Transverse colon (tissue), 4 donors: ENCODE measurements at regions of chr5 and their contacts with region 1.

Region 1: GRCh38 chr5:130616161-130616560 is 548.9 kb downstream of the HINT1 start:
- DNase-seq: no peak
- H3K4me3 ChIP-seq: no peak overlapping the region
- H3K27ac ChIP-seq: no peak overlapping the region
- H3K4me1 ChIP-seq: no peaks in the 10 kb centered on the region
- H3K27me3 ChIP-seq: no peaks in the 10 kb centered on the region
- CTCF ChIP-seq: no peak
- EP300 ChIP-seq: no peak
- POLR2A ChIP-seq: no peak

Region 2: GRCh38 chr5:129958581-129958980 is 657.6 kb before region 1 on chr5:
- in situ Hi-C with region 1: no loop called
- intact Hi-C with region 1: loop called (anchors 10 kb)
- DNase-seq: no peak
- H3K4me3 ChIP-seq: no peak overlapping the region
- H3K27ac ChIP-seq: no peak overlapping the region
- H3K4me1 ChIP-seq: no peaks in the 10 kb centered on the region
- H3K27me3 ChIP-seq: no peaks in the 10 kb centered on the region
- CTCF ChIP-seq: no peak
- EP300 ChIP-seq: no peak
- POLR2A ChIP-seq: no peak